Activated CD8-positive, alpha-beta memory T cell treated with anti-CD3 and anti-CD28 coated beads, Interleukin-2, amount 10 ng/mL, durations not matched to agents 7 days and 5 days (primary cell): ENCODE measurements at regions of chr1 and their contacts with region 1.

Region 1: DNA sequence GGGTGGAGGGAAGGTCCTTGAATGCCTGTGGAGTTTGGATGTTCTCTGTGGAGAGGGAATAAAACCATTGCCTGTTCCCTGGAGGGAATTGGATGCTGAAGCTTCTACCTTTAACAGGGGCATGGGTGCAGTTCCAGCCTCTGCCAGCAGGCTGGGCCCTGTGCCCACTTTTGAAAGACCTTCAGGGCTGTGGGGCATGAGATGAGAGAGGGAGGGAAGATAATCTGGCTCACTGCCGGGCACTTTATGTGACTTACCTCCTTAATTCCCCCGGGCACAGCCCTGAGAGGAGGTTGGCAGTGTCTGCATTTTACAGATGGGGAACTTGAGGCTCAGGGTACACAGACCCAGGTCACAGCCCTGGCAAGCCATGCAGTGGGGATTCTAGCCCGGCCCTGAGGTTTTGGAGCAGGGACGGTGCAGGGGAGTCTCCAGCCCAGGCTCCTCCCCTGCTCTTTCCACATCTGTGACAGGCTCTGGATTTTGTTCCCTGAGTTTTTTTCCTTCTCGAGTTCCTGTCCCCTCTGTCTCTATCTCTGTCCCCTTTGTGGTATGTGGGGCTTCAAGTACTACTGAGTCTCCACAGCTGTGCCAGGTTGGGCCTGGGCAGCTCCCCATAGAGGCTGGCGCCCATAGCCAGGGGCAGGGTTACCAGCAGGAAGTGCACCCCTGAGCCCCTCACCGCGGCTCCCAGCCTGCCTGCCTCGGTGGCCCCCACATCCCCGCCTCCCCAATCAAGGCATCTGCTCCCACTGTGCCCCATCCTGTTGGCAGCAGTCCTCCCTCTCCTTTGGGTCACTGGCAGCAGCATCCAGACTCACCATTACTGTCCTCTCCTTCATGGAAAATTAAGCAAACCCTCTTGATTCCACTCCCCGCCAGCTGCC is 14.0 kb upstream of the THEMIS2 start:
- DNase-seq: peak; percentile 89
- ATAC-seq: peak; percentile 98
- H3K4me3 Mint-ChIP-seq: no peak overlapping the region
- H3K27ac Mint-ChIP-seq: peak overlapping the region; percentile 29
- H3K4me1 Mint-ChIP-seq: peaks cover 9% of the 10 kb centered on the region
- H3K27me3 Mint-ChIP-seq: no peaks in the 10 kb centered on the region

Region 2: GRCh38 chr1:27868932-27869718 is 10.8 kb after region 1 on chr1:
- CTCF ChIA-PET with region 1: interaction called, 10 read pairs
- DNase-seq: peak; percentile 87
- ATAC-seq: peak; percentile 58
- H3K4me3 Mint-ChIP-seq: peak overlapping the region; percentile 55
- H3K27ac Mint-ChIP-seq: peak overlapping the region; percentile 89
- H3K4me1 Mint-ChIP-seq: peaks cover 45% of the 10 kb centered on the region
- H3K27me3 Mint-ChIP-seq: no peaks in the 10 kb centered on the region

Region 3: GRCh38 chr1:27891196-27891889 is 33.0 kb after region 1 on chr1:
- CTCF ChIA-PET with region 1: interaction called, 10 read pairs
- DNase-seq: peak; percentile 69
- ATAC-seq: peak; percentile 31
- H3K4me3 Mint-ChIP-seq: peak overlapping the region; percentile 10
- H3K27ac Mint-ChIP-seq: peak overlapping the region; percentile 85
- H3K4me1 Mint-ChIP-seq: peaks cover 57% of the 10 kb centered on the region
- H3K27me3 Mint-ChIP-seq: no peaks in the 10 kb centered on the region

Region 4: GRCh38 chr1:27979151-27979858 is 121.0 kb after region 1 on chr1:
- CTCF ChIA-PET with region 1: interaction called, 59 read pairs
- DNase-seq: no peak
- ATAC-seq: peak; percentile 73
- H3K4me3 Mint-ChIP-seq: no peak overlapping the region
- H3K27ac Mint-ChIP-seq: no peak overlapping the region
- H3K4me1 Mint-ChIP-seq: peaks cover 4% of the 10 kb centered on the region
- H3K27me3 Mint-ChIP-seq: no peaks in the 10 kb centered on the region

Region 5: DNA sequence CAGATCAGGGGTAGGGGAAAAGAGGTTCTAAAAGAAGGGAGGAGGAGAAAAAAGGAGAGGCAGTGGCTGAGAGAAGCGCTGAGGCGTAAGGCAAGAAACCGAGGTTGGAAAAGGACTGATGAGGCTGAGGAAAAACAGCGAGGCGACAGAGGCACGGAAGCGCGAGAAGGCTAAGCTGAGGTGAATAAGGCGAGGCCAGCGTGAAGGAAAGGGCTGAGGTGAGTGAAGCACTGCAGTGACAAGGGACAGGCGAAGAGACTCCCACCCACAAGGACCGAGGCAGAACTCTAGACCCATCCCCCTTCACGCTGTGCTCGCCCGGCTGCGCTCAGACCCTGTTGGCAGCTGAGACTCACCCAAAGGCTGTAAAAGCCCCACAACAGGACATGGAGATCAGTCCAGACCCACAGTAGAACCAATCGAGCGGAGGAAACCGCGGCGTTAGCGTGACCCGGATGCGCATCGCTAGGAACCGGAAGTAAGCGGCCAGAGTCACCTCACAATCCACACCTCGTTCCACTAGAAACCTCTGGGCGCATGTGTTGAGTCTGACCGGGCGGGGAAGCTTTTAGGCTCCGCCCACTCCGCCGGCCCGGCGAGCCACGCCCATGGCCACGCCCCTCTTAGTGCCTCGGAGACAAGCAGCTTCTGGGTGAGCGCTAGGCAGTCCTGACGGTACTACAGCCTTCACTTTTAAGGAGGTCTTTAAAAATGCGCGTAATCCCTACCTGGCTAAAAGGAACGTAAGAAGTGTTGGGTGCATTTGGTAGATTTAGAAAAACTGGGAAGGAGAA is 230.1 kb after region 1 on chr1 and contains the start of gene EYA3:
- CTCF ChIA-PET with region 1: interaction called, 13 read pairs
- DNase-seq: peak; percentile 99
- ATAC-seq: peak; percentile 89
- H3K4me3 Mint-ChIP-seq: peak within 1 kb of the TSS; percentile 97
- H3K27ac Mint-ChIP-seq: peak within 1 kb of the TSS; percentile 97
- H3K4me1 Mint-ChIP-seq: peaks cover 36% of the 10 kb centered on the region
- H3K27me3 Mint-ChIP-seq: peaks cover 6% of the 10 kb centered on the region
- total RNA-seq, gene EYA3: 33.2 to 33.4 TPM